ENCODE measurements at regions of chr3 and their contacts with region 1.

Region 1: DNA sequence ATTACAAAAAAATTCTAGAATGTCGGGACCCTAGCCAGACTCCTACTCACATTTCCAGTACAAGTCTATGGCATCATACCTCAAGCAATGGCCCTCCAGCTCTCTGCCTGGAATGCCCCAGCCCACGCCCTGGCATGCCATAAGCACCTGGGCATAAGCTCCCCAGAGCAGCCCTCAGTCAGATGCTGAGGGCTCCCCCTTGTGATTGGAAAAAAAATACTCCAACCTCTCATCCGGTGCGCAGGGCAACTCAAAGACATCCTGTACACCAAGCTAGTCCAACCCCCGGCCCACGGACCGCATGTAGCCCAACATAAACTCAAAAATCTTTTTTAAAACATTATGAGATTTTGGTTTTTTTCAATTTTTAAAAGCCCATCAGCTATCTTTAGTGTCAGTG is 115.4 kb downstream of the NEK10 start:
- DNase-seq: peak; percentile 46
- ATAC-seq: peak; percentile 73
- H3K4me3 Mint-ChIP-seq: no peak overlapping the region
- H3K27ac Mint-ChIP-seq: no peak overlapping the region
- H3K4me1 Mint-ChIP-seq: no peaks in the 10 kb centered on the region
- H3K27me3 Mint-ChIP-seq: no peaks in the 10 kb centered on the region

Region 2: DNA sequence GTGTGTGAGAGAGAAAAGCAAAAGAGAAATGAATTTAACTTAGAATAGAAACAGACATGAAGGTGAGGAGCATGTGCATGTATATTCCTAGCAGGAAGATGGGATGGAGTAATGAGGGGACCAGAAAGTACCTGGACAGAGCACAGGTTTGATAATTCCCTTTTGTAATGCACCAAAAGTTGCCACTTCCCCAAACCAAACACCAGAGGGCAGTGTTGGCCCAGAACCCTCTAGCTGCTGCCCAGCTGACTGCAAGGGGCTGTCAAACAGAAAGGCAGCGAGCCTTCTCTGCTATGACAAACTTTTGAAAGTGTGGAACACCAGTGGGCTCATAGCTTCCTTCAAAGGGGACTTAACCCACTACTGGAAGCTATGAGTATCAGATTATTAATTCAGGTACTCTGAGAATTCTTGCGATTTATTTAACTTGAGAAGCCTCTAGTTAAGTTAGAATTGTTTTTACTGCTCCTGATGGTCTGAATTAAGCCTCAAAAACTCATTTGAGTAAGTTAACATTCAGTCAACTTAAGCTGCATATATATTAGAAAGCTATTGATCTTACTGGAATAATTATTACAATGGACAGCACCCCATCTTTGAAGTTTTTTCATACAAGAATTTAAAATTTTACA is 119.5 kb before region 1 on chr3:
- CTCF ChIA-PET with region 1: interaction called, 23 read pairs
- POLR2A ChIA-PET with region 1: no interaction called
- DNase-seq: peak; percentile 72
- ATAC-seq: peak; percentile 61
- H3K4me3 Mint-ChIP-seq: no peak overlapping the region
- H3K27ac Mint-ChIP-seq: no peak overlapping the region
- H3K4me1 Mint-ChIP-seq: no peaks in the 10 kb centered on the region
- H3K27me3 Mint-ChIP-seq: no peaks in the 10 kb centered on the region

Region 3: DNA sequence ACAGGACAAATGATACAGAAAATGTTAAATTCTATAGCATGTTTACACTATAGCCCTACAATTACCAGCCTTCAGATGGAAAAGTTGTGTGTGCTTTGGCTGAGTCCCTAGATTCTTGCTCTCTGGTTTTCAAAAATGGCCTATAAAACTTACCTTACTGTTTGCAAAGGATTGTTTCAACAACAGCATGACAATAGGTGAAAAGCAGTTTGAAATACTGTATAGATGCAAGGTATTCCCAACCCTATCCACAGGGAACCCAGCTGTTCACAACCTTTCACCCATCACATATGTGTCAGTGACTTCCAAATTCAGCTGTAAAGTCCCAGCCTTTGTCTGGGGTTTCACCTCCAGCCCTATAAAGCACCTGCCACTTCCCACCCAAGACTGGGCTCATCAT is 18.1 kb after region 1 on chr3:
- CTCF ChIA-PET with region 1: no interaction called
- POLR2A ChIA-PET with region 1: no interaction called
- DNase-seq: no peak
- ATAC-seq: no peak
- H3K4me3 Mint-ChIP-seq: no peak overlapping the region
- H3K27ac Mint-ChIP-seq: no peak overlapping the region
- H3K4me1 Mint-ChIP-seq: no peaks in the 10 kb centered on the region
- H3K27me3 Mint-ChIP-seq: no peaks in the 10 kb centered on the region

Region 4: GRCh38 chr3:27368831-27369607 is 115.2 kb after region 1 on chr3 and contains the start of gene NEK10:
- CTCF ChIA-PET with region 1: no interaction called
- POLR2A ChIA-PET with region 1: no interaction called
- DNase-seq: peak; percentile 93
- ATAC-seq: peak; percentile 99
- H3K4me3 Mint-ChIP-seq: peak within 1 kb of the TSS; percentile 82
- H3K27ac Mint-ChIP-seq: peak within 1 kb of the TSS; percentile 58
- H3K4me1 Mint-ChIP-seq: peaks cover 14% of the 10 kb centered on the region
- H3K27me3 Mint-ChIP-seq: no peaks in the 10 kb centered on the region
- total RNA-seq, gene NEK10: 0.74 to 0.81 TPM